ENCODE measurements at regions of chr11 and their contacts with region 1.

Region 1: GRCh38 chr11:129871914-129872313 is 23.5 kb downstream of the NFRKB start:
- DNase-seq: no peak
- H3K4me3 Mint-ChIP-seq: no peak overlapping the region
- H3K27ac Mint-ChIP-seq: no peak overlapping the region
- H3K4me1 Mint-ChIP-seq: peaks cover 5% of the 10 kb centered on the region
- H3K27me3 Mint-ChIP-seq: no peaks in the 10 kb centered on the region

Region 2: GRCh38 chr11:129861702-129862113 is 10.2 kb before region 1 on chr11:
- CTCF ChIA-PET with region 1: interaction called, 13 read pairs
- POLR2A ChIA-PET with region 1: no interaction called
- DNase-seq: no peak
- H3K4me3 Mint-ChIP-seq: no peak overlapping the region
- H3K27ac Mint-ChIP-seq: peak overlapping the region; percentile 92
- H3K4me1 Mint-ChIP-seq: peaks cover 55% of the 10 kb centered on the region
- H3K27me3 Mint-ChIP-seq: no peaks in the 10 kb centered on the region

Region 3: GRCh38 chr11:130029137-130029536 is 157.2 kb after region 1 on chr11:
- CTCF ChIA-PET with region 1: no interaction called
- POLR2A ChIA-PET with region 1: no interaction called
- DNase-seq: no peak
- H3K4me3 Mint-ChIP-seq: no peak overlapping the region
- H3K27ac Mint-ChIP-seq: no peak overlapping the region
- H3K4me1 Mint-ChIP-seq: no peaks in the 10 kb centered on the region
- H3K27me3 Mint-ChIP-seq: no peaks in the 10 kb centered on the region

Region 4: DNA sequence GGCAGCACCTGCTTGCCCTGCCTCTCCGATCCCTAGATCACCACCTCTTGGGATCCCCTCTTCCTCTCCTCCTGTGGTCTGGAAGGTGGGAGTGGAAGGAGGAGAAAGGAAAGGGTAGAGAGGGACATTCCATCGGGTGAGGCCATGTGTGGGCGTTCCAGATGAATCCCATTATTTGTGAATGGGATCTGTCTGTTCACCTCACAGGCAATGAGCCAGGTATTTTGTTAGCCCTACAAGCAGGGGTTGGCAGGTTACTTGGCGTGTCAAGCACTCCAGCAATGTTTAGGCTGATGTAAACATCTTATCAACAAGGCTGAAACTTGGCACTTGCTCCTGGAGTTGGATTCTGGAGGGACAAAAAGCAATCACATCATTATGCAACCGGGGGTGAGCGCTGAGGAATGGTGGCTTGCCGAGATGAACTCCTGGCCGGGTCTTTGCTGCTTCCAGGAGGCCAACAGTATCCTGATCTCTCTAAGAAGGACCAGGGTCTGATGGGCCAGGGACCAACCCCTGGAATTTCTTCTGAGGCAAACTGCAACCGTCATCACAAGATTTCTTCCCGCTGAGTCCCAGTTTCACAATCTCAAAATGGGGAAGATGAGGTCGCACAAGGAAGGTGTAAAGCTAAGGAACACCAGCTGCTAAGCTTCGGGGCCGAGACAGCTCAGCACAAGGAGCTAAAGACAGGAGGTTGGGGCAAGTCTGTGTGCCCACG is 548.7 kb after region 1 on chr11:
- CTCF ChIA-PET with region 1: no interaction called
- POLR2A ChIA-PET with region 1: no interaction called
- DNase-seq: no peak
- H3K4me3 Mint-ChIP-seq: no peak overlapping the region
- H3K27ac Mint-ChIP-seq: no peak overlapping the region
- H3K4me1 Mint-ChIP-seq: no peaks in the 10 kb centered on the region
- H3K27me3 Mint-ChIP-seq: peaks cover 6% of the 10 kb centered on the region